Endothelial cell of umbilical vein (primary cell): ENCODE measurements at regions of chr11 and their contacts with region 1.

Region 1: GRCh38 chr11:111230122-111230465 is 15.4 kb upstream of the POU2AF2 start:
- DNase-seq: no peak
- H3K4me3 ChIP-seq: no peak overlapping the region
- H3K27ac ChIP-seq: no peak overlapping the region
- H3K4me1 ChIP-seq: no peaks in the 10 kb centered on the region
- H3K27me3 ChIP-seq: peaks cover 1 to 3% of the 10 kb centered on the region in 2 experiments
- CTCF ChIP-seq: no peak
- POLR2A ChIP-seq: no peak

Region 2: DNA sequence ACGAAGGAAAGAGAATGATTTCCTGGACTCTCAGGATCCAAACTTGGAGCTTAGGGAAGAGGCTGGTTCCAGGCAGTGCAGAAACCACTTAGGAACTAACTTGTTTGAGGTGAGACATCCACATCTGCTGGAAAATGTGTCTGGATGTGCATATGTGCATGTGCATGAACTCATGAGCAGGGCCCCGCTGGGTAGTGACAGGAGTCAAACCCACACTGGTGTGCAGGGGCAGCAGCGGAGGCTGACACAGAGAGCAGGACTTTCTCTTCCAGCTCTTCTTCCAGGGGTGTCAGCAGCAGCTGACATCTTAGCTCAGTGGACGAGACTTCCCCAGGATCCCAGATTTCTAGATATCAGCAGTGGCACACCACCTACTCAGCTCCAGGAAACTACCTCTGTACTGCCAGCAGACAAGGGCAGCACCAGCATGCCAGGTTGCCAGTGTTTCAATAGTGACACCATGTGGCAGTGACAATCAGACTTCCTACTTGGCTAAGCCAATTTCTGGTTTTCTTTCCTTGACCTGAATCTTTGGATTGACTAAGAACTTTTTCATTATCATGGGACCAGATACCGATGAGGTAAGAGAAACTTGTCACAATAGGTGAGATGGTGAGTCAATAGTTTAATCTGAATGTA is 1364.4 kb before region 1 on chr11:
- CTCF ChIA-PET with region 1: no interaction called
- POLR2A ChIA-PET with region 1: no interaction called
- dilution Hi-C with region 1: no loop called
- intact Hi-C with region 1: loop called (anchors 10 kb)
- DNase-seq: no peak
- H3K4me3 ChIP-seq: no peak overlapping the region
- H3K27ac ChIP-seq: no peak overlapping the region
- H3K4me1 ChIP-seq: peaks cover 23% of the 10 kb centered on the region
- H3K27me3 ChIP-seq: no peaks in the 10 kb centered on the region
- CTCF ChIP-seq: no peak
- POLR2A ChIP-seq: no peak

Region 3: GRCh38 chr11:110077831-110078325 is 1152.2 kb before region 1 on chr11:
- CTCF ChIA-PET with region 1: no interaction called
- POLR2A ChIA-PET with region 1: no interaction called
- dilution Hi-C with region 1: no loop called
- intact Hi-C with region 1: no loop called
- DNase-seq: peak; percentile 68
- H3K4me3 ChIP-seq: no peak overlapping the region
- H3K27ac ChIP-seq: peak overlapping the region; percentile 45
- H3K4me1 ChIP-seq: peaks cover 22% of the 10 kb centered on the region
- H3K27me3 ChIP-seq: no peaks in the 10 kb centered on the region
- CTCF ChIP-seq: no peak
- POLR2A ChIP-seq: no peak

Region 4: DNA sequence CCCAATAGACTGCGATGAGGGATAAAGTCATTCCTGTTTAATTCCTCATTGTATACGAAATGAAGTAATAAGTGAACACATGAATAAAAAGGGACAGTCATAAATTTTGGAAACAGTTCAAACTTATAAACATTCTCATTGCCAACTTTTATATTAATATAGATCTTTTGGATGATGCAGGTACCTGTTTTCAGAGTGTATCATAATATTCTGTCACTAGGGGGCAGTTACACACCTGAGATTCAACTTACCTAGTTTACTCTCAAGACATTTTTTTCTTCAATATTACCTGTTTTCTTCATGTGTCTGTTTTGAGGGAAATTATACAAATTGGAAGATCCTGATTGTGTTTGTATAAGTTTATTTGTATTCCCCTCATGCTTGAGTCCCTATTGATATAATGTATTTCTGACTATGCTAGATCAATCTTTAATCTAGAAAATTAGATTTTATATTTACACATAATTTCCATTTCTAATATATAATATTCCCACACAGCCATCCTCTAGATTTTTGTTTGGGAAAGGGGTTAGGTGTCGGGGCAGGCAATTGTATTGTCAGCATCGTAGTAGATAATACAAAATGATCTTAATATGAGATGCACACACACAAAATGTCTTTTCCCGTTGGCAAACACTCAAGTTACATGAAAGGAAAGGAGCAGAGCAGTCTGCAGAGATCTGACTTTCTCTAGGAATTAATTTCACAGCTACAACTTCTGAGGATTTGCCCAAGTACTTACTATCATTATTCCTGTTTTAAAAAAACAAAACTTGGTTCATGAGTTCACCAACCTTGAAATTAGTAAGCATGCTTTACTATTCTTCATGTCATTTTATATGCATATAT is 782.0 kb before region 1 on chr11:
- CTCF ChIA-PET with region 1: interaction called, 37 read pairs
- POLR2A ChIA-PET with region 1: no interaction called
- dilution Hi-C with region 1: no loop called
- intact Hi-C with region 1: loop called (anchors 1 kb)
- DNase-seq: peak; percentile 28
- H3K4me3 ChIP-seq: no peak overlapping the region
- H3K27ac ChIP-seq: no peak overlapping the region
- H3K4me1 ChIP-seq: no peaks in the 10 kb centered on the region
- H3K27me3 ChIP-seq: no peaks in the 10 kb centered on the region
- CTCF ChIP-seq: no peak
- POLR2A ChIP-seq: no peak

Region 5: DNA sequence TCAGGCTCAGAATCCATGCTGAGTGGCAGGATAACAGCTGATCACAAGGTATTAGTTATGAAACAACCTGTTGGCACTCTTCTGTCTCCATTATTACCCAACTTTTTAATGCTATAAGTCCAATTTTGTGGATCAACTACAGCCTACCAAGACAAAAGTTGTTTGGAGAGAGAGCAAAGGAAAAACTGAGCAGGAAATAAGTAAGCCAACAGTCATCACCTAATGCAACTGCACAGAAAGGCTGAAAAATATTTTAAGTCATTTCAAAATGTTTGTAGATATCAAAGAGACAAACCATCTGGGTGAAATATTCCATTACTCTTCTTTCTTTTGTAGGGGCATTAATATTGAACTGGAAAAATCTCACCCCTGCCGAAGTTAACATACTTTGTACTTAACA is 758.7 kb before region 1 on chr11:
- CTCF ChIA-PET with region 1: interaction called, 69 read pairs
- POLR2A ChIA-PET with region 1: no interaction called
- dilution Hi-C with region 1: no loop called
- intact Hi-C with region 1: loop called (anchors 2 kb)
- DNase-seq: no peak
- H3K4me3 ChIP-seq: no peak overlapping the region
- H3K27ac ChIP-seq: no peak overlapping the region
- H3K4me1 ChIP-seq: peaks cover 8% of the 10 kb centered on the region
- H3K27me3 ChIP-seq: no peaks in the 10 kb centered on the region
- CTCF ChIP-seq: no peak
- POLR2A ChIP-seq: no peak

Region 6: DNA sequence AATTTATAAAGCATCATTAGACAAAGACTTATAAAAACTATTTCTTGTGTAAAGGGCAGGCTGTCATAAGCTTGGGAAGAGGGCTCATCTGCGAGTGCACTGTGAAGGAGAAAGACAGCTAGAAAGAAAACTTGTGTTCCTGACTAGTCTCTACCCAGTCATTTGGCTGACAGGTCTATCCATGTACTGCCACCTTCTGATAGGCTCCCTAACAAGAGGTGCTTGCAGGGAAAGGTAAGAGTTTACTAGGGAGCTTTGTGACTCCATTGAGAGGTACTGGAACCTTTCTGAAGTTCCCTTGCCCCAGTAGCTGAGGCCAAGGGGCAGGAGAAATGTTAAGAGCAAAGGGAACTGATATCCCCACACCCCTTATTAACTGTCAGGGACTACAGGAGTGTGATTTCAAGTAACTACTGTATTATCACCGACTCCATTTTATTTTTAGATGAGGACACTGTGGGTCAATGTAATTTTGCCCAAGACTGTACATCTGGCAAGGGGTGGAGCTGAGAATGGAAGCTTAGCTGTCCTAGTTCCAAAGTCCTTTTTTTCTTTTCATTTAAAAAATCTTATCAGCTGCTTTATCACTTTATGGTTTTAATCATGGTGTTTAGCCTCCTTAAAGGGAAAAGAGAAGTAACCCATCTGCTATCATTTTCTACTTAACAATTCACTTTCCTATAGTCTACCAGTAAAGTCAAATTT is 647.2 kb before region 1 on chr11:
- CTCF ChIA-PET with region 1: no interaction called
- POLR2A ChIA-PET with region 1: no interaction called
- dilution Hi-C with region 1: no loop called
- intact Hi-C with region 1: loop called (anchors 5 kb)
- DNase-seq: no peak
- H3K4me3 ChIP-seq: no peak overlapping the region
- H3K27ac ChIP-seq: no peak overlapping the region
- H3K4me1 ChIP-seq: no peaks in the 10 kb centered on the region
- H3K27me3 ChIP-seq: no peaks in the 10 kb centered on the region
- CTCF ChIP-seq: no peak
- POLR2A ChIP-seq: no peak

Region 7: DNA sequence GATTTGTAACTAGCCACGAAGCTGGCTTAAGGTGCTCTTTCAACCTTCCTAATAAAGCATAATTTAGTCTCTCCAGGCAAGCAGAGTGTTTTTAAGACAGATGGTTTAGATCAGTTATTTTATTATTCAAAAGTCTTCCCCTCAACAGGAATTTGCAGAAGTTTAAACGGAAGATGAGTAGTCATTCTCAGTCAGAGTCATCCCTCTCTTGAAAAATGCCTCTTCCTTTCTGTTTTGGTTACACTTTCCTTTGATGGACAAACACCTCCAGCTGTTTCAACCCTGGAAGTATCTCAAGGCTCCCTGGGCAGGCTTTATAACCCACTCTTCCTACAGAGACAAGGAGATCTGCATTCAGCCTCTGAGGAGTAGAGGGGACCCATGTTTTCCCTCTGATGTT is 44.8 kb before region 1 on chr11:
- CTCF ChIA-PET with region 1: no interaction called
- POLR2A ChIA-PET with region 1: no interaction called
- dilution Hi-C with region 1: no loop called
- intact Hi-C with region 1: no loop called
- DNase-seq: no peak
- H3K4me3 ChIP-seq: no peak overlapping the region
- H3K27ac ChIP-seq: no peak overlapping the region
- H3K4me1 ChIP-seq: no peaks in the 10 kb centered on the region
- H3K27me3 ChIP-seq: no peaks in the 10 kb centered on the region
- CTCF ChIP-seq: no peak
- POLR2A ChIP-seq: no peak

Region 8: DNA sequence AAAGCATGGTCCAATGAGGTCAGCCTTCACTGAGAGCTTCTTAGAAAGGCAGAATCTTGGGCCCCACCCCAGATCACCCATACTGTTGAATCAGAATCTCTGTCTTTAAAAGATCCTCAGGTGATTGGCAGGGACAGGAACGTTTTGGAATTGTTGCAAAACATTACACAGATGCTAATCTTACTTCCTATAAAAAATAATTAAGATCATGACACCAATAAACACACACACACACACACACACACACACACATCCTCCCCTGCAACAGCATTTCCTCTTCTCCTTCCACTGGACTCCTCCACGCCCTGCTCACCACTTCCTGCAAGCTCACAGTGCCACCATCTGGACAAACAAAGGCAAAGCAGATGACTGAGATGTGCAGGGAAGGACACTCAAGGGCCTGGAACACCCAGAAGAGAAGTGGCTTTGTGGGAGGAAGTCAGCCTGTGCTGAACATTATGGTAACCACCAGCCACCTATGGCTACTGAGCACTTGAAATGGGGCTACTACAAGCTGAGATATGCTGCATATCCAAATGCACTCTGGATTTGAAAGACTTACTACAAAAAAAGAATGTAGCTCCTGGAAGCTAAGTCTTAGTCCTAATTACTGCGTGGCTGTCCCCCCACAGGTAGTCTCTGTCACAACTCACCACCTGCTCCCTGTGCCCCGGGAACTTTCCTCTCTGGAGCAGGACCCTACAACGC is 216.5 kb after region 1 on chr11:
- CTCF ChIA-PET with region 1: interaction called, 7 read pairs
- POLR2A ChIA-PET with region 1: no interaction called
- dilution Hi-C with region 1: no loop called
- intact Hi-C with region 1: loop called (anchors 2 kb)
- DNase-seq: peak; percentile 79
- H3K4me3 ChIP-seq: no peak overlapping the region
- H3K27ac ChIP-seq: no peak overlapping the region
- H3K4me1 ChIP-seq: peaks cover 3% of the 10 kb centered on the region
- H3K27me3 ChIP-seq: no peaks in the 10 kb centered on the region
- CTCF ChIP-seq: peak; percentile 76 to 85
- POLR2A ChIP-seq: no peak